ENCODE measurements at regions of chr9 and their contacts with region 1.

Region 1: DNA sequence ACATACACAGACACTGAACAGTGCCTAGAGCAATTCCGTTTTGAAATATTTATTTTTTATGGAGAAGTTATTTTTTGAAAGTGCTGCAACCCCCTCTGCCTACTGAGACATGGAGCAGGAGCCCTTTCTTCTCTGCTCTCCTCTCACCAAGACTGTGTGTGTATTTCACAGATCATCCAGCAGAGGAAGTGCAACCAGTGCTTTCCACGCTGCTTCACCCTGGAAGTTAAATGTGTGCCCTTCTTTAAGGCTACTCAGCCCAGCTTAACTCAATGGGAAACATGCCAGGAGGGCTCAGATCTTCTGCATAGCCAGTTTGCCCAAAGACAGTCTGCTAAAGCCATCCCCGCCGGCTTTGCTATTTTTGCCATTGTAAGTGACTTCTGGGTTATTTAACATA is 606.3 kb downstream of the TLE1 start:
- DNase-seq: no peak
- H3K4me3 ChIP-seq: no peak overlapping the region
- H3K27ac ChIP-seq: no peak overlapping the region
- H3K4me1 ChIP-seq: peaks cover 0 to 16% of the 10 kb centered on the region in 2 donors
- H3K27me3 ChIP-seq: no peaks in the 10 kb centered on the region
- CTCF ChIP-seq: peak in 2 of 3 experiments; percentile 13 to 14

Region 2: DNA sequence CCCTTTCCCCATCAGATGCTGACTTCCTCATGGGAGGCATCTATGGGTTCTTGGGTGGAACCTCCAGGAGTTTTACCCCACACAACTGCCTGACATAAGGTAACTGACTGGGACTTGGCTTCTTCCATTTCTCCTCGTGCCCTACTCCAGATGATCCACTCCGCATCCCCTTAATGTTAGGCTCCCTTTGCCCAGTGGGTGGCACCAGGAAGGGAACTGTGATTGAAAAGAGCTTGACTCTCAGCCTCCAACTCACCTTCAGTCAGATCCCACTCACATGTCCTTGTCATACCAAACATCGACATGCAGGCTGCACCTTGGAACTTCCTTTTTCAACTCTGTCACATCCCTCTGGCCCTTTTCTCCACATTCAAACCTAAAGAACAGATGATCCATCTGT is 74.1 kb after region 1 on chr9:
- intact Hi-C with region 1: no loop called
- DNase-seq: no peak
- H3K4me3 ChIP-seq: no peak overlapping the region
- H3K27ac ChIP-seq: no peak overlapping the region
- H3K4me1 ChIP-seq: no peaks in the 10 kb centered on the region
- H3K27me3 ChIP-seq: no peaks in the 10 kb centered on the region
- CTCF ChIP-seq: no peak

Region 3: GRCh38 chr9:81394881-81395675 is 312.0 kb after region 1 on chr9:
- intact Hi-C with region 1: loop called (anchors 10 kb)
- DNase-seq: no peak
- H3K4me3 ChIP-seq: no peak overlapping the region
- H3K27ac ChIP-seq: no peak overlapping the region
- H3K4me1 ChIP-seq: no peaks in the 10 kb centered on the region
- H3K27me3 ChIP-seq: no peaks in the 10 kb centered on the region
- CTCF ChIP-seq: no peak

Measured in ascending aorta (tissue), 2 donors.